Right cardiac atrium (tissue), 5 donors: ENCODE measurements at regions of chr3 and their contacts with region 1.

Region 1: GRCh38 chr3:40580494-40581091 is 55.8 kb downstream of the ZNF621 start:
- DNase-seq: peak; percentile 66 to 79 (median 69)
- ATAC-seq: peak; percentile 59 to 65
- H3K4me3 ChIP-seq: no peak overlapping the region
- H3K27ac ChIP-seq: no peak overlapping the region
- H3K4me1 ChIP-seq: peaks cover 2% of the 10 kb centered on the region
- H3K27me3 ChIP-seq: no peaks in the 10 kb centered on the region

Region 2: GRCh38 chr3:41198950-41199865 is 618.6 kb after region 1 on chr3 and contains the start of gene CTNNB1:
- intact Hi-C with region 1: loop called in 3 of 4 experiments (anchors 10 kb)
- DNase-seq: peak; percentile 92 to 98 (median 97)
- ATAC-seq: peak; percentile 95 to 96
- H3K4me3 ChIP-seq: peak within 1 kb of the TSS; percentile 93
- H3K27ac ChIP-seq: peak within 1 kb of the TSS; percentile 95
- H3K4me1 ChIP-seq: no peaks in the 10 kb centered on the region
- H3K27me3 ChIP-seq: no peaks in the 10 kb centered on the region
- total RNA-seq, gene CTNNB1: 154 to 263 (median 180) TPM

Region 3: DNA sequence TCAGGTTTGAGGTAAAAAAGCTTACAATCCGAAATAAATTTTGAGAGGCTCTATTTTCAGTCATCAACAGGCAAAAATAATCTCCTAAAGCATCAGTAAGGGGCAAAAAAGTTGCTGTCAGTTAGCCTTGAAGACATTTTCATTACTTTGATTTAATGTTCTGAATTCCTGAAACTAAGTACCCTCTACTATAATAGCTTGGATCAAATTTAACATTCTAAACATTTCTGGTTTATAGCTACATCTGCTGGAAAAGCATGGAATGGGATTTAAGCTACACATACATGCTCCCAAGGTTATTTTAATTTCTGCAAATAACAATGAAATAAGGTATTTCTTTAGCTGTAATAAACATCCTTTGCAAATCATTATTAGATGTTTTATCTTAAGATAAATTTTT is 1135.9 kb after region 1 on chr3:
- intact Hi-C with region 1: loop called (anchors 5 to 10 kb)
- DNase-seq: no peak
- ATAC-seq: no peak
- H3K4me3 ChIP-seq: no peak overlapping the region
- H3K27ac ChIP-seq: no peak overlapping the region
- H3K4me1 ChIP-seq: peaks cover 2% of the 10 kb centered on the region
- H3K27me3 ChIP-seq: no peaks in the 10 kb centered on the region

Region 4: GRCh38 chr3:41881233-41881821 is 1300.7 kb after region 1 on chr3:
- intact Hi-C with region 1: loop called (anchors 5 to 10 kb)
- DNase-seq: no peak
- ATAC-seq: no peak
- H3K4me3 ChIP-seq: no peak overlapping the region
- H3K27ac ChIP-seq: no peak overlapping the region
- H3K4me1 ChIP-seq: no peaks in the 10 kb centered on the region
- H3K27me3 ChIP-seq: no peaks in the 10 kb centered on the region